Activated CD8-positive, alpha-beta T cell treated with anti-CD3 and anti-CD28 coated beads for 36 hours (primary cell): ENCODE measurements at regions of chr2 and their contacts with region 1.

Region 1: GRCh38 chr2:61493523-61493942 is 22.6 kb upstream of the USP34 start:
- DNase-seq: peak; percentile 27
- ATAC-seq: peak; percentile 53
- H3K4me3 Mint-ChIP-seq: no peak overlapping the region
- H3K27ac Mint-ChIP-seq: peak overlapping the region; percentile 76
- H3K4me1 Mint-ChIP-seq: peaks cover 13% of the 10 kb centered on the region
- H3K27me3 Mint-ChIP-seq: no peaks in the 10 kb centered on the region
- CTCF ChIP-seq: no peak

Region 2: GRCh38 chr2:61504949-61505348 is 11.4 kb after region 1 on chr2:
- CTCF ChIA-PET with region 1: interaction called, 3 read pairs
- POLR2A ChIA-PET with region 1: interaction called, 10 read pairs
- intact Hi-C with region 1: no loop called
- DNase-seq: no peak
- ATAC-seq: no peak
- H3K4me3 Mint-ChIP-seq: no peak overlapping the region
- H3K27ac Mint-ChIP-seq: no peak overlapping the region
- H3K4me1 Mint-ChIP-seq: peaks cover 13% of the 10 kb centered on the region
- H3K27me3 Mint-ChIP-seq: no peaks in the 10 kb centered on the region
- CTCF ChIP-seq: no peak